HepG2 (cell line): ENCODE measurements at regions of chr6 and their contacts with region 1.

Region 1: GRCh38 chr6:722077-722524 is 29.2 kb upstream of the EXOC2 start:
- DNase-seq: peak; percentile 57
- ATAC-seq: peak; percentile 85
- H3K4me3 ChIP-seq: no peak overlapping the region
- H3K27ac ChIP-seq: no peak overlapping the region
- H3K4me1 ChIP-seq: no peaks in the 10 kb centered on the region
- H3K27me3 ChIP-seq: peaks cover 0 to 53% of the 10 kb centered on the region in 2 experiments; a peak in 4 of 5 replicates
- CTCF ChIP-seq: peak; percentile 85
- EP300 ChIP-seq: no peak
- POLR2A ChIP-seq: no peak
- RAD21 ChIP-seq: peak; percentile 64

Region 2: DNA sequence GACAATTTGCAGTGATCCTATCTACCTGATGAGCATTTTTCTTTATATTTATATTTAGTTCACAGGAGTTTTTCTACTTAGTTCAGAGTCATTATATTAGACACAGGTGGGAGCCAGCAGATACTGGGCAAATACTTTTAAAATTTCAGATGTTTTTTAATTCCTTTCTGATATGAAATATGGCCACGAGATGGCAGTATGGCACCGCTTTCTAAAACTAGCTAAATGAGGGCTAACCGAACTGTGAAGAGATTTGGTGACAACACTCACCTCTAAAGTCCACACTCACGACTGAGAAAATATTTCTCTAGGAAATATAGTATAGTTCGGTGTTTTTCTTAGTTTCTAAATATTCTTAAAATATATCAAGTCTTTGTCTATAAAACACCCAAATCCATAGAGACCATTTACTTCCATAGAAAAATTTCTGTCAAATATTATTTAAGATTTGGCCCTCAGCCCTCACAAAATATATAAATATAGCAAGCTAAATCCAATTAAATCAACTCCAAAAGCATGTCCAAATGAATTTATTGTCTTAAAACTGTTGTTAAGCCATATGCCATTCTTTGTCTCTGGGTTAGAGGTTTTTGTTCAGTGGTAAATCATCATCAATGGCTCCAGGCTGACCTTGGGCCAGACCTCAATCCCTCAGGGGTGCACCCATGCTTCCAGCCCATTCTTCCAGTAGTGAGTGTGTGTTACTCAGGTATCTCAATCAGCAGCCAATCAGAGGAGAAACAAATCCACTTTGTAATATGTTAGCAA is 128.8 kb before region 1 on chr6:
- CTCF ChIA-PET with region 1: interaction called, 5 read pairs
- POLR2A ChIA-PET with region 1: no interaction called
- in situ Hi-C with region 1: no loop called
- intact Hi-C with region 1: loop called (anchors 1 kb)
- DNase-seq: peak; percentile 56
- ATAC-seq: peak; percentile 66
- H3K4me3 ChIP-seq: no peak overlapping the region
- H3K27ac ChIP-seq: no peak overlapping the region
- H3K4me1 ChIP-seq: no peaks in the 10 kb centered on the region
- H3K27me3 ChIP-seq: no peaks in the 10 kb centered on the region
- CTCF ChIP-seq: peak; percentile 72
- EP300 ChIP-seq: no peak
- POLR2A ChIP-seq: no peak
- RAD21 ChIP-seq: peak; percentile 56; the same call in 1 of the 2 replicates

Region 3: GRCh38 chr6:786946-787763 is 65.1 kb after region 1 on chr6:
- CTCF ChIA-PET with region 1: interaction called, 3 read pairs
- POLR2A ChIA-PET with region 1: no interaction called
- in situ Hi-C with region 1: no loop called
- intact Hi-C with region 1: loop called (anchors 1 kb)
- DNase-seq: peak; percentile 35
- ATAC-seq: peak; percentile 68
- H3K4me3 ChIP-seq: no peak overlapping the region
- H3K27ac ChIP-seq: no peak overlapping the region
- H3K4me1 ChIP-seq: no peaks in the 10 kb centered on the region
- H3K27me3 ChIP-seq: peaks cover 0 to 26% of the 10 kb centered on the region in 2 experiments; a peak in 3 of 5 replicates
- CTCF ChIP-seq: peak; percentile 76
- EP300 ChIP-seq: no peak
- POLR2A ChIP-seq: no peak
- RAD21 ChIP-seq: peak; percentile 27; the same call in 1 of the 2 replicates

Region 4: GRCh38 chr6:1335367-1336037 is 613.4 kb after region 1 on chr6:
- CTCF ChIA-PET with region 1: interaction called, 12 read pairs
- POLR2A ChIA-PET with region 1: no interaction called
- in situ Hi-C with region 1: no loop called
- intact Hi-C with region 1: loop called (anchors 1 kb)
- DNase-seq: peak; percentile 98
- ATAC-seq: peak; percentile 93
- H3K4me3 ChIP-seq: peak overlapping the region; percentile 20 to 65 (median 31)
- H3K27ac ChIP-seq: peak overlapping the region; percentile 73
- H3K4me1 ChIP-seq: peaks cover 48% of the 10 kb centered on the region
- H3K27me3 ChIP-seq: peaks cover 0 to 10% of the 10 kb centered on the region in 2 experiments; a peak in 1 of 5 replicates
- CTCF ChIP-seq: peak; percentile 41
- EP300 ChIP-seq: peak; percentile 89 to 93
- POLR2A ChIP-seq: peak in 1 of 2 experiments; percentile 52; a peak in 3 of 4 replicates
- RAD21 ChIP-seq: peak; percentile 52; the same call in 1 of the 2 replicates

Region 5: GRCh38 chr6:1381481-1382330 is 659.6 kb after region 1 on chr6:
- CTCF ChIA-PET with region 1: interaction called, 13 read pairs
- POLR2A ChIA-PET with region 1: no interaction called
- in situ Hi-C with region 1: no loop called
- intact Hi-C with region 1: loop called (anchors 5 kb)
- DNase-seq: no peak
- ATAC-seq: peak; percentile 86
- H3K4me3 ChIP-seq: peak overlapping the region; percentile 45 to 65 (median 46); a peak in 5 of 6 replicates
- H3K27ac ChIP-seq: no peak overlapping the region
- H3K4me1 ChIP-seq: peaks cover 21% of the 10 kb centered on the region; the same call in 1 of the 2 replicates
- H3K27me3 ChIP-seq: peaks cover 42 to 96% of the 10 kb centered on the region in 2 experiments
- CTCF ChIP-seq: peak; percentile 90
- EP300 ChIP-seq: no peak
- POLR2A ChIP-seq: no peak
- RAD21 ChIP-seq: peak; percentile 100

Region 6: DNA sequence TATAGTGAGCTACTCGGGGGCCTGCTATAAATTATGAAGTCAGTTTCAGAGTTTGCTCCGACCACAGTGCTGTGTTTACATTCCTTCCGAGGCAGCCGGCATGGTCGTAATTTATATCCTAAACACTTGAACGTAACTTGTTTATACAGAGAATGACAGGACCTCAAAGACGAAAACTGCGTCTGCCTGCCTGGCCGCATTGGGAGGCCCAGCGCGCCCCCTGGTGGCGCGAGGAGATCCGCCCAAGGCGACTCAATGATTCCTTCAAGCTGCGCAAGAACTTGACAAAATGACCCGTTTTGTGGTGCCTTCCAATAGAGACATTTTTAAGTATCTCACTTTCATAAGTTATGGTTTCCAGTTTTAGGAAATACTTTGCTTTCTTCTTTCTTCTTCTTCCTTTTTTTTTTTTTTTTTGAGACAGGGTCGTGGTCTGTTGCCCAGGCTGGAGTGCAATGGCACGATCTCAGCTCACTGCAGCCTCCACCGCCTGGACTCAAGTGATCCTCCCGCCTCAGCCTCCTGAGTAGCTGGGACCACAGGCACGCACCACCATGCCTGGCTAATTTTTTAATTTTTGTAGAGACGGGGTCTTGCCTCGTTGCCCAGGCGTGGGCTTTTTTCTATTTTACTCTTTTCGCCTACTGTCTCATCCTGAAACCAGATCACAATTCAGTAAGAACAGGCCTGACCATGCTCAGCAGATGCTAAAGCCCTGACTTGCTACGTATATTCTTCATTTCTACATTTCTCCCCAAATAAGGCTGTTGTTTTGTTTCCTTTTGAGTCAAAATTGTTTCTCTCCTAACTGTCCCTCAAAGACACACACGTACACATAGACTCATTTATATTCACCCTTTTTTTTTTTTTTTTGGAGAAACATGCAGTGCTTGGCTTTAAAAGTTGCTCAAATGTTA is 675.1 kb after region 1 on chr6:
- CTCF ChIA-PET with region 1: interaction called, 3 read pairs
- POLR2A ChIA-PET with region 1: no interaction called
- in situ Hi-C with region 1: no loop called
- intact Hi-C with region 1: loop called (anchors 2 kb)
- DNase-seq: peak; percentile 31
- ATAC-seq: peak; percentile 67
- H3K4me3 ChIP-seq: no peak overlapping the region
- H3K27ac ChIP-seq: no peak overlapping the region
- H3K4me1 ChIP-seq: no peaks in the 10 kb centered on the region
- H3K27me3 ChIP-seq: peaks cover 35 to 93% of the 10 kb centered on the region in 2 experiments; a peak in 4 of 5 replicates
- CTCF ChIP-seq: peak; percentile 91
- EP300 ChIP-seq: no peak
- POLR2A ChIP-seq: no peak
- RAD21 ChIP-seq: peak; percentile 79

Region 7: DNA sequence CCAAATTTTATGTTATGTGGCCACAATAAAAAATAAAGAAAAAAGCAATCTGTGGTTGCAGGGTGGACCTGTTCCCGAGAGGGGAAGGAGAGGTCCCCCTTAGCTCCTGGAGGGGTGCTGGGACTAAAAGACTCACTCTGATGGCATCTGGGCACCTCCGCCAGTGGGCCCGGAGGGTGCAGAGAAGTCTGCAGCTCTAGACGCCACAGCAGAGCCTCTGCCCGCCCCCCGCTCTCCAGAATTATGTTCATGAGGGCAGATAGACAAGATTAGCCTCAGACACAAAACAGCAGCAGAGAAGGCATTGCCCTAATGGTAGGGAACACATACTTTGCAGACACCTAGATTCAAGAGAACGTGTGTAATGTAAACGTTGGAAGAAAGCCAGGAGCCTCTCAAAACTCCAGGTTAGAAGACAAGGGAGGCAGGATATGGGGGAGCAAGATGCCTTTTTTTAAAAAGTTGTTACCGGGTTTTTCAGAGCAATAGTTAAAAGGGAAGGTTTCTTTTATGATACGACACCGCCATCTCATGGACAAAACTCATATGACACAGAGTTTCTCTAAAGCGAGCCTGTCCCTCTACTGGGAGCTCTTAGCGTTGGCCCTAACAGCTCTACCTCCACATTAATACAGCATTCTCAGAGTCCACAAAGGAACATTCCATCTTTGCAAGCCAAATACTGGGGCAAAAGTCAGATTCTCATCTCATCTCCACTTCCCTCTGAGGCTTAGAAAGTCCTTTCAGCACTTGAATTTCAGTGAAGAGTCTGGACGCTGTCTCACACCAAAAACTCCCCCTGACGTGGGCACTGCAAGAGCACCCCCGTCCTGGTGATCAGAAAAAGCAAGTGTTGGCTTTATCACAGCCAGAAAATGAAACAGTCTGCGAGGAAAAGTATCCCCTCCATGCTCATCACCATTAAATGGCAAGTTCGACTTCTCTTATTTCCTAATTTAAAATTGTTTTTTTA is 714.5 kb after region 1 on chr6:
- CTCF ChIA-PET with region 1: interaction called, 18 read pairs
- POLR2A ChIA-PET with region 1: no interaction called
- in situ Hi-C with region 1: no loop called
- intact Hi-C with region 1: loop called (anchors 2 kb)
- DNase-seq: peak; percentile 67
- ATAC-seq: peak; percentile 98
- H3K4me3 ChIP-seq: no peak overlapping the region
- H3K27ac ChIP-seq: no peak overlapping the region
- H3K4me1 ChIP-seq: no peaks in the 10 kb centered on the region
- H3K27me3 ChIP-seq: peaks cover 10 to 47% of the 10 kb centered on the region in 2 experiments
- CTCF ChIP-seq: peak; percentile 84
- EP300 ChIP-seq: no peak
- POLR2A ChIP-seq: no peak
- RAD21 ChIP-seq: peak; percentile 84